ENCODE measurements at regions of chr3 and their contacts with region 1.

Region 1: GRCh38 chr3:45881078-45882022 is 5.0 kb upstream of the CCR9 start:
- DNase-seq: peak in 4 of 5 donors; percentile 31 to 84 (median 56)
- H3K4me3 ChIP-seq: no peak overlapping the region
- H3K4me3 Mint-ChIP-seq: peak overlapping the region in 6 of 7 donors; percentile 1 to 66 (median 59)
- H3K27ac ChIP-seq: no peak overlapping the region
- H3K27ac Mint-ChIP-seq: peak overlapping the region in 7 of 8 donors; percentile 8 to 72 (median 41)
- H3K4me1 ChIP-seq: peaks cover 20% of the 10 kb centered on the region
- H3K4me1 Mint-ChIP-seq: peaks cover 22 to 76% (median 33%) of the 10 kb centered on the region in 3 donors
- H3K27me3 ChIP-seq: peaks cover 7% of the 10 kb centered on the region
- H3K27me3 Mint-ChIP-seq: peaks cover 10 to 13% of the 10 kb centered on the region in 2 donors

Region 2: GRCh38 chr3:45868214-45868613 is 13.1 kb before region 1 on chr3:
- CTCF ChIA-PET with region 1: interaction called, 7 read pairs
- POLR2A ChIA-PET with region 1: interaction called, 10 read pairs
- DNase-seq: no peak
- H3K4me3 ChIP-seq: no peak overlapping the region
- H3K4me3 Mint-ChIP-seq: no peak overlapping the region
- H3K27ac ChIP-seq: no peak overlapping the region
- H3K27ac Mint-ChIP-seq: no peak overlapping the region
- H3K4me1 ChIP-seq: peaks cover 41% of the 10 kb centered on the region
- H3K4me1 Mint-ChIP-seq: peaks cover 44 to 82% (median 60%) of the 10 kb centered on the region in 3 donors
- H3K27me3 ChIP-seq: no peaks in the 10 kb centered on the region
- H3K27me3 Mint-ChIP-seq: peaks cover 12 to 13% of the 10 kb centered on the region in 2 donors

Measured in CD8-positive, alpha-beta memory T cell (primary cell).